ENCODE measurements at regions of chr1 and their contacts with region 1.

Region 1: DNA sequence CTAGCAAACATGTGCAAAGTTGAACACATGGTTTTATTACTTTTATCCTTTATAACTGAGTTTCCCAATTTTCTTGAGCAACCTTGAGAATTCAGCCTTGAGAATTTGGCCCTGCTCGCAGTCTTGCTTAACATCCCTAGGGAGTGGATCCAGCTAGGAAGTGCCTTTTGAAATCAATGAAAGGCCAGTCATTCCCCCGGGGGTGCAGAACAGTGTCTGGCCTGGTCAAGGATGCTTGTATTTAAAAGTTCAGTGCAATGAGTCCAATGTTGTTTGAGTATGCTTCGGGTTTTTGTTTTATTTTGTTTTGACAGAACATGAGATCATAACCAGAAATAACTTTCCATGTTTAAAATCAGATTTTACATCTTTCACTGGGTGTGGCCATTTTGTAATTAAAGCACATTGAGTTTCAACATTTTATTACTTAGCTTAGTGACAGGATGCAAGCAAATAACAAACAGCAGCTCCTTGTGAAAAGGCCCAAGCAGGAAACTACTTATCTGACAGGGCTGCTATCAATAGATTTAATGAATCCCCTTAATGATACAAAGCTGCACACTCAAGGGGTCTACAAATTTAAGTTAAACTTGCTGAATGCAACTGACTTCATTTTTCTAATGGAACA is 16.8 kb downstream of the PALMD start:
- DNase-seq: peak; percentile 69 to 86 (median 81)
- ATAC-seq: peak; percentile 68 to 89 (median 87)
- H3K4me3 ChIP-seq: no peak overlapping the region
- H3K27ac ChIP-seq: peak overlapping the region; percentile 35 to 98 (median 73)
- H3K4me1 ChIP-seq: peaks cover 32 to 96% (median 61%) of the 10 kb centered on the region in 12 donors
- H3K27me3 ChIP-seq: no peaks in the 10 kb centered on the region
- CTCF ChIP-seq: no peak
- POLR2A ChIP-seq: no peak

Region 2: GRCh38 chr1:99533909-99534637 is 128.6 kb before region 1 on chr1:
- intact Hi-C with region 1: loop called in 2 of 10 experiments (anchors 5 to 10 kb)
- DNase-seq: peak in 2 of 5 donors; percentile 31 to 35
- ATAC-seq: peak; percentile 63 to 71 (median 67)
- H3K4me3 ChIP-seq: peak overlapping the region in 7 of 12 donors; percentile 3 to 25 (median 15)
- H3K27ac ChIP-seq: peak overlapping the region; percentile 20 to 81 (median 66)
- H3K4me1 ChIP-seq: peaks cover 3 to 36% (median 21%) of the 10 kb centered on the region in 12 donors
- H3K27me3 ChIP-seq: no peaks in the 10 kb centered on the region
- CTCF ChIP-seq: no peak
- POLR2A ChIP-seq: no peak

Region 3: GRCh38 chr1:99707535-99708142 is 44.9 kb after region 1 on chr1:
- intact Hi-C with region 1: no loop called
- DNase-seq: peak in 4 of 5 donors; percentile 57 to 76 (median 66)
- ATAC-seq: peak; percentile 58 to 86 (median 80)
- H3K4me3 ChIP-seq: no peak overlapping the region
- H3K27ac ChIP-seq: peak overlapping the region in 3 of 12 donors; percentile 24 to 34 (median 29)
- H3K4me1 ChIP-seq: peaks cover 0 to 14% (median 0%) of the 10 kb centered on the region in 12 donors
- H3K27me3 ChIP-seq: no peaks in the 10 kb centered on the region
- CTCF ChIP-seq: peak; percentile 81 to 96 (median 92)
- POLR2A ChIP-seq: no peak

Region 4: GRCh38 chr1:101128211-101128727 is 1465.6 kb after region 1 on chr1:
- intact Hi-C with region 1: no loop called
- DNase-seq: no peak
- ATAC-seq: peak in 2 of 4 donors; percentile 20 to 65
- H3K4me3 ChIP-seq: no peak overlapping the region
- H3K27ac ChIP-seq: peak overlapping the region in 3 of 12 donors; percentile 5 to 18 (median 15)
- H3K4me1 ChIP-seq: peaks cover 0 to 13% (median 3%) of the 10 kb centered on the region in 12 donors
- H3K27me3 ChIP-seq: no peaks in the 10 kb centered on the region
- CTCF ChIP-seq: no peak
- POLR2A ChIP-seq: no peak